Activated CD4-positive, alpha-beta T cell treated with anti-CD3 and anti-CD28 coated beads for 36 hours (primary cell): ENCODE measurements at regions of chr14 and their contacts with region 1.

Region 1: DNA sequence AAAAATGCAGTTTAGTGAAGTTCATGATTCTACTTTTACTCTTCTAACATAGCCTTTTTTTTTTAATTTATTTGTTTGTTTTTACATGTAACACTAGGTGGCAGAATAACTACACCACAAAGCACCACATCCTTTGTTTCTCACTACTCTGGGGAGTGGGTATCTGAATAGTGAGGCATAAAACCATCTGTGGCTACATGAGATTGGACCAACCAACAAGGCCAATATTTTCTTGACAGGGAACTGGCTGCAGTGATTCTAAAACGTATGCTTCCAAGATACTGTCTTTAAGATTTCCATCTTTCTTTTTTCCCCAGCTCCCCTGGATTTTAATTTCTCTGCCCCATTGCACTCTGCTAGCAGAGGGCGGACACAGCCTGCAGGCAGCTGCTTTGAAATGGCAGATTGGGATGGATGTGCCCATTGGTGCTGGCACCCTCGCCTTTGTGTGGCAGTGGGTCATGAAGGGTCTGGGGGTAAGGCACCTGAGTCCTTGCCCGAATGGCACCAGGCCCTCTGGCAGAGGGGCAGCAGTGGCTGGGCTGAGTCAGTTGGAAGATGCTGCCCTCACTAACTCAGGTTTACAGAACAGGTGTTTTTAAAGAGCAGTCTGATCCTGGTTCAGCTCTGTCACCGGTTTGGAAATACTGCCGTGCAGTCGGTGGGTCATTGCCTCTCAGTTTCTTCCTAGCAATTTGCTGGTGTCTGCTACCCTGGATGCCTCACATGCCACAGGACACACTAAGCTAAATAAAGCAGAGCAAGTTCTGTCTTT is 429.1 kb downstream of the RAD51B start:
- DNase-seq: peak; percentile 14
- ATAC-seq: peak; percentile 65
- H3K4me3 Mint-ChIP-seq: no peak overlapping the region
- H3K27ac Mint-ChIP-seq: no peak overlapping the region
- H3K4me1 Mint-ChIP-seq: peaks cover 42% of the 10 kb centered on the region
- H3K27me3 Mint-ChIP-seq: no peaks in the 10 kb centered on the region

Region 2: DNA sequence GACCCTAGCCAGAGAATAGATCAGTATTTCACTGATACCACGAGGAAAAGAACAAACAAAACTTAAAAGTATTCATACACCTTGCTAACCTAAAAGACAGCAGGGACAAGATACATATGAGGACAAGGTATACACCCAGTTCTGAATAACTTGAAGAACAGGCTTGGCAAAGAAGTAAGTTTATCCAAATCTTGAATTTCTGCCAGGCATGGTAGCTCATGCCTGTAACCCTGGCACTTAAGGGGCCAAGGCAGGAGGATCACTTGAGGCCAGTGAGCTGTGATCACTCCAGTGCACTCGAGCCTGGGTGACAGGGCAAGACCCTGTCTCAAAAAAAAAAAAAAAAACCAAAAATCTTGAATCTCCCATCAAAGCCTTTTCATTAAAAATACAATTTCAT is 863.6 kb before region 1 on chr14:
- CTCF ChIA-PET with region 1: no interaction called
- POLR2A ChIA-PET with region 1: no interaction called
- intact Hi-C with region 1: no loop called
- DNase-seq: no peak
- ATAC-seq: no peak
- H3K4me3 Mint-ChIP-seq: no peak overlapping the region
- H3K27ac Mint-ChIP-seq: no peak overlapping the region
- H3K4me1 Mint-ChIP-seq: peaks cover 7% of the 10 kb centered on the region
- H3K27me3 Mint-ChIP-seq: no peaks in the 10 kb centered on the region

Region 3: GRCh38 chr14:67943947-67944346 is 304.7 kb before region 1 on chr14:
- CTCF ChIA-PET with region 1: interaction called, 8 read pairs
- POLR2A ChIA-PET with region 1: no interaction called
- intact Hi-C with region 1: loop called (anchors 2 kb)
- DNase-seq: peak; percentile 59
- ATAC-seq: peak; percentile 66
- H3K4me3 Mint-ChIP-seq: no peak overlapping the region
- H3K27ac Mint-ChIP-seq: no peak overlapping the region
- H3K4me1 Mint-ChIP-seq: no peaks in the 10 kb centered on the region
- H3K27me3 Mint-ChIP-seq: no peaks in the 10 kb centered on the region

Region 4: DNA sequence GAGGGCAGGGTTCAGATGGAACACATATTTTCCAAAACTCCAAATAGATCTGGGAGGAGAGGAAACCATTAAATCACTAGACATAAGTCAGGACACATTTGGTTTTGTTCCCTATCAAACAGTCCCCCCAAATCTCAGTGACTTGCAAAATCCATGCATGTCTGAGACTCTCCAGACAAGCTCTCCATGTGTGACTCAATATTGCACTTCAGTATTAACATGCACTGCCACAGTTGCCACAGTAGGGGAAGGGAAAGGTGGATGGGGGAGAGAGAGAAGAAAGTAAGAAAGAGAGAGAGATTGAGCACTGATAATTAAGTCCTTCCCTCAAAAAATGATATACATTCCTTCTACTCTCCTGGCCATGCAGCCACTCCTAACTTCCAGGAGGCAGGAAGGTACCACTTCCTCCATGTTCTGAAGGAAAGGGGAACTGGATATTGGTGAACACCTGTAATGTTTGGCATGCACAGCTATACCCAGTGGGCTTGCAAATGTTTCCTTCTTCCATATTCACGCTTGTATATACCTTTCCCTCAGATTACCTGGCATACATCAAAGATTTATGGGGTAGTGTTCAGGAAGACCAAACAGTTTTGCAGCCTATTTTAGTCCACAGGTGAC is 234.2 kb after region 1 on chr14:
- CTCF ChIA-PET with region 1: interaction called, 3 read pairs
- POLR2A ChIA-PET with region 1: no interaction called
- intact Hi-C with region 1: loop called in 1 of 2 experiments (anchors 5 kb)
- DNase-seq: no peak
- ATAC-seq: no peak
- H3K4me3 Mint-ChIP-seq: no peak overlapping the region
- H3K27ac Mint-ChIP-seq: peak overlapping the region; percentile 61
- H3K4me1 Mint-ChIP-seq: peaks cover 56% of the 10 kb centered on the region
- H3K27me3 Mint-ChIP-seq: no peaks in the 10 kb centered on the region